GM13976 (cell line): ENCODE measurements at regions of chr18 and their contacts with region 1.

Region 1: DNA sequence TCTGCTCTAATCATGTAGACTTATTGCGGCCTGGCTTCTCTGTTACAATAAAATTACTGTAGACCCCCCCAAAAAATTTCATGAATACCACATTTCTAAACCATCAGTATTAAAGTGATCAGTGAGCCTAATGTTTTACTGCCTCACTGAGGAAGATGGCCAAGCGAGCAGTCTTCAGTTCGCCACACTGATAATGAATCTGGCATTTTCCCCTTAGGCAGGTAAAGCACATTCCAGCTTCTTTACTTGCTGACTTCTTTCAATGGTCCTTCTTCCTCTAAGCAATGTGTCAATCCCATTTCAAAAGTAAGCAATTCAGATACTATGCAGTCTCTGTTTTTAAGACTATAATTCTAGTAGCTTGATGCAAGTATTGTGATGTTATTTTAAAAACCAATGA is 137.6 kb downstream of the LAMA1 start:
- DNase-seq: no peak
- CTCF ChIP-seq: no peak

Region 2: DNA sequence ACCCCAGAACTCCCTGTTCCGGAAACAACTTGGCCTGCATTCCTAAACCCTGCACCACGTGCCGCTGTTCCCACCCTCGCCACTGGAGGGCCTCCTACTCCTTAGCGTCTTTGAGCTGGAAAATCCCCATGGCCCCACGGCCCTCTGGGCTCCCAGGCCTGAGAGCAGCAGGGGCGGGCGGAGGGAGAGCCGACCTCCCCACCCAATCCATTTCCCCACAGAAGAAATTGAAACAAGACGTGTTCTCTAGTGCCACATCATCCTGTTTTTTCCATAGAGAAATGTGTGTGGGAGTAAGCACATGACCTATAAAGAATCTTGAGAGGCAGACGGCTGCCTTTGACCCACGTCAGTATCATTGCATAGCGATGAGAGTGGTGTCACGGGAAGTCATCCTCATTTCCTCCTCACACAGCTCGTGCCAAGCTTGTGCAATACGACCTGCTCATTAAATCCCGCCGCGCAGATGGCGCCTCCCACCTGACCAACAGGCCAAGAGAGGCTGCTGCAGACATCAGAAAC is 58.4 kb after region 1 on chr18:
- in situ Hi-C with region 1: loop called (anchors 10 kb)
- DNase-seq: no peak
- CTCF ChIP-seq: peak; percentile 13

Region 3: GRCh38 chr18:7778181-7778580 is 798.2 kb after region 1 on chr18:
- in situ Hi-C with region 1: no loop called
- DNase-seq: no peak
- CTCF ChIP-seq: no peak